Dendritic cell treated with granulocyte-macrophage colony-stimulating factor and Interleukin-4, amounts not matched to agents 40 ng/mL and 50 ng/mL, for 4 days (primary cell): ENCODE measurements at regions of chr7 and their contacts with region 1.

Region 1: GRCh38 chr7:111486472-111487142 is 75.7 kb downstream of the IMMP2L start:
- H3K4me3 Mint-ChIP-seq: no peak overlapping the region
- H3K27ac Mint-ChIP-seq: no peak overlapping the region
- H3K4me1 Mint-ChIP-seq: no peaks in the 10 kb centered on the region
- H3K27me3 Mint-ChIP-seq: no peaks in the 10 kb centered on the region

Region 2: DNA sequence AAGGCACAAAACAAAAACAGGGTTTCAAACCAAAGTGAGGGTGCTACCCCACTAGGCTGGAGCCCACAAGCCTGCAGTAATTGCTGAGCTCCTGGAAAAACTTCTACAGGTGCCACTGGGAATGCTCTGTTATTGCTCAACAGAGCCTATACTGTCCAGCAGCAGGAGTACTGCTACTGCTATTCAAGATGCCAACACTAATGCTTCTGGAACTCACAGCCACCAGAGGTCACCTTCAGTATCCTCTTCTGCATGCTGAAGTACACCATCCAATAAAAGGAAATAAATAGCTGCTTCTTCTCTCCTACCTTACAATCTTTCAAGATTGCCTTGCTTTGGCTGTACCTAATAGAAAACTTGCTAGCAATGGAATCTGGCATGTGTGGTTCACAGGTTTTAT is 173.6 kb before region 1 on chr7:
- intact Hi-C with region 1: loop called (anchors 5 kb)
- H3K4me3 Mint-ChIP-seq: no peak overlapping the region
- H3K27ac Mint-ChIP-seq: no peak overlapping the region
- H3K4me1 Mint-ChIP-seq: no peaks in the 10 kb centered on the region
- H3K27me3 Mint-ChIP-seq: no peaks in the 10 kb centered on the region

Region 3: GRCh38 chr7:111517549-111517951 is 30.9 kb after region 1 on chr7:
- intact Hi-C with region 1: no loop called
- H3K4me3 Mint-ChIP-seq: no peak overlapping the region
- H3K27ac Mint-ChIP-seq: no peak overlapping the region
- H3K4me1 Mint-ChIP-seq: peaks cover 6% of the 10 kb centered on the region
- H3K27me3 Mint-ChIP-seq: no peaks in the 10 kb centered on the region